Ovary (tissue), 10 donors: ENCODE measurements at regions of chr13 and their contacts with region 1.

Region 1: DNA sequence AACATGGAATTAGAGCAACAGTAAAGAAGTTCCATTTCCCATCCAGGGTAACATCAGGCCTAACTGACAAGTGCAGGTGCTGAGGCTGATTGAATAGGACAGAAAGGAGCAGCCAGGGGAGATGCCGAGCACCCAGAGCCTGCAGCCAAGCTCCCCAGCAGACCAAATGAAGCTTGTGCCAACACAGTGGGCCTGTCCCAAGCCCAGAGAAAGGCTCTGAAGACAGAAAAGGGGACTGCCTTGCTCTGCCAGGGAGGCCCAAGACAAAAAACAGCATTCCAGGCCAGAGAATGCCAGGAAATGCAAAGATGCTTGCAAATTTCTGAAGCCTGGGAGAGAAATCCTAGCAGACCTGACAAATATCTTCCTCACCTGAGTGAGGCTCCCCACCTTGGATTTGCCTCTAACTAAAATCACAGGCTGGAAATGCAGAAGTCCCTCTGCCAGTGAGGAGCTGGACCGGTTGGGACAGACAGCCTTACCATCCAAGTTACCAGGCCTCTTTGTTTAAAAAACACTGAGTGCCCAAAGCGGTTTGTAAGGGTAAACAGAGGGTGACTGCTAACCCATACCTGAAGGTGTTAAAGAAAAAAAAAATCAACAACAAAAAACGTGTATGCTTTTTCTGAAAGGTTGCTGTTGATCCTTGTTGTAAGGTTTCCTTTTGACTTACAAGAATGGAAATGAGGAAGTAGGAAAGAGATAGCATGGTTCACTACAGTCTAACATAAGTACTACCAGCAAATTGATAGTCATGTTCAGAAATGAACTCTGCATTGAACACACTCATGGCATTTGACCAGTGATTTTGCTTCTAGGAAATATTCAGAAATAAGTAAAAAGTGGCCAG is 11.8 kb upstream of the HMGB1 start:
- DNase-seq: no peak
- H3K4me3 ChIP-seq: no peak overlapping the region
- H3K27ac ChIP-seq: no peak overlapping the region
- H3K4me1 ChIP-seq: no peaks in the 10 kb centered on the region
- H3K27me3 ChIP-seq: no peaks in the 10 kb centered on the region
- CTCF ChIP-seq: no peak
- EP300 ChIP-seq: no peak
- POLR2A ChIP-seq: no peak

Region 2: DNA sequence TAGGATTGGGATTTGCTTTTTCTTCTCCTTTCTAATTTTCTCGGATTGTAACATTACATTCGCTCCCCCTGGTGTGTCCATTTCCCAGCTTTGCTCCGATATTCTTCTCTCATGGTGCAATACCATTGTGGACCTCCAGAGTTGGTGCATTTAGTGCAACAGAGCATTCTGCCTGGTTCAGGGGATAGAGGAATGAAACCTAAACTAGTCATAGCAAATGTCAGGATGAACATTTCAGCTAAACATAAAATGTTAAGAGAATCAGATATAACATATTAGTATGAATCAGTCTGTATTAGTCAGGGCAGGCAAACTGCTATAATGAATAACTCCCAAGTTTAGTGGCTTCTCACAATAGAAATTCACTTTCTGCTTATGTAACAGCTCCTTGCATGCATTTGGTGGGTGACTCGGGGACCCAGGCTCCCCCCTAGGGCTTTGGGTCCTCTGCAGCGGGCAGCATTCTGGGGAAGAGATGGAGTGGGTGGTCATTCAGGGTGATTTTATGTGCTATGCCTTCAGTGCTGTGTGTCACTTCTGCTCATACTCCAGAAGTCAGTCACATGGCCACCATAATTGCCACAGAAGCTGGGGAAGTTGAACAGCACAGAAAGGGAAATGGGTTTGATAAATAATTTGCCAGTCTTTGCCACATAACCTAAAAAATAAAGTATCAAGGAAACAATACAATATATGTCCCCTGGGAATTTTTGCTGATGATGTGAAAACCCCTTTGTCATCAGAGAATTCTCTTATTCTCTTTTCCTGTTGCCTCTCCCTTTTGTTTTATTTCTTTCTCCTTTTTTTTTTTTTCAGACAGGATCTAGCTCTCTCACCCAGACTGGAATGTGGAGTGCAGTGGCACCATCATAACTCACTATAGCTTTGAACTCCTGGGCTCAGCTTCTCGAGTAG is 573.2 kb after region 1 on chr13:
- intact Hi-C with region 1: loop called in 1 of 4 experiments (anchors 10 kb)
- DNase-seq: no peak
- H3K4me3 ChIP-seq: no peak overlapping the region
- H3K27ac ChIP-seq: no peak overlapping the region
- H3K4me1 ChIP-seq: peaks cover 6% of the 10 kb centered on the region
- H3K27me3 ChIP-seq: no peaks in the 10 kb centered on the region
- CTCF ChIP-seq: no peak
- EP300 ChIP-seq: no peak
- POLR2A ChIP-seq: no peak